ENCODE measurements at regions of chr17 and their contacts with region 1.

Region 1: DNA sequence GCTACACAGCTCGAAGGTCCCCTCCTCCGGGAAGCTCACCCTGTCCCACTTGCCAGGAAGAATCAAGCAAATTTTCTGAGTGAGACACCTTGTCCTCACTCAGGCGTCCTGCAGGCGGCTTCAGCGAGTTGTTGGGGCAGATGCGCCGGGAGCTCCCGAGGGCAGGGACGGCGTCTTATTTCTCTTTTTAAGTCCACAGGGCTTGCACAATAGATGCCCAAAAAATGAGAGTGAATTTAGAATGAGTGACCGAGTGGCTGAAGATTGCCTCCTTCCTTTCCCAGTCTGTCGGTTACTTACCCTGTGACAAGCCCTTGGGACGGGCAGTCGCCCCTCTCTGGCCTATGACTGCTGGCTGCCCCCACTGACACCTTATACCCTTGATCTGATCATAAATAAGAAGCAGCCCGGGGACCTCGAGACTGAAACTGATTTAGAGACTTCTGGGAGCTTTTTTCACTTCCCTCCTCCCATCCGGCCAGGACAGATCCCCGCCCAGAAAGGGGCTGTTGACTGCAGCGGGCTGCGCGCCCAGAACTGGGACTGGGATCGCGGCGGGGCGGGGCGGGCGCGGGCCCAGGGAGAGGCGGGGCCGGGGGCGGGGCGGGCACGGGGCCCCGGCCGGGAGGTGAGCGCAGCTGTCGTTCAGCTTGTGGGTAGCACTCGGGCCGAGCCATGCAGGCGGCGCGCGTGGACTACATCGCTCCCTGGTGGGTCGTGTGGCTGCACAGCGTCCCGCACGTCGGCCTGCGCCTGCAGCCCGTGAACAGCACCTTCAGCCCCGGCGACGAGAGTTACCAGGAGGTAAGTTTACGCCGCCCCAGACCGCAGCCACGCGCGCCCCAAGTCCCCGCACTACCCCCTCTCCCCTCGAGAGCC is at the start of gene TTYH2:
- DNase-seq: peak; percentile 90
- H3K4me3 ChIP-seq: peak within 1 kb of the TSS; percentile 36 to 59 (median 46)
- H3K27ac ChIP-seq: peak within 1 kb of the TSS; percentile 75 to 87 (median 78)
- H3K4me1 ChIP-seq: peaks cover 21 to 45% (median 35%) of the 10 kb centered on the region in 4 donors
- H3K27me3 ChIP-seq: peaks cover 10% of the 10 kb centered on the region
- CTCF ChIP-seq: peak in 4 of 5 experiments; percentile 17 to 55 (median 34)
- EP300 ChIP-seq: no peak
- POLR2A ChIP-seq: peak; percentile 47
- total RNA-seq, gene TTYH2: 0.37 to 5.2 (median 2.3) TPM

Region 2: DNA sequence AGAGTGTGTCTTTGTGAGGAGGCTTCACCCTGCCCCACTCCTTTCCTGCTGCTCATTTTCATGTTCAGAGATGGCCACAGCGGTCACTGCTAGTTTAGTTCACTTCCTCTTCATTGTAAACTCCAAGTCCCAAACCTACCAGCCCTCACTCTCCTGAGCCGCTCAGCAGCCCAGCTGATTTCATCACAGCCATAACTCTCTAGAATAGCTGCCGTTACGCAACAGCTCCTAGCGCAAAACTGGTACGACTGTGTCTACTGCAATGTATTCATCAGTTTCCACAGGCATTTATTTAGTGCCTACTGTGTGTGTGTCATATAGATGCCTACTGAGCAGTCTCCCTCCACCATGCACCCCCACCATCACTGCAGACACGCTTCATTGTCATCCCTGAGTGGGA is 243.2 kb before region 1 on chr17:
- in situ Hi-C with region 1: no loop called
- intact Hi-C with region 1: no loop called
- DNase-seq: peak; percentile 22
- H3K4me3 ChIP-seq: no peak overlapping the region
- H3K27ac ChIP-seq: no peak overlapping the region
- H3K4me1 ChIP-seq: no peaks in the 10 kb centered on the region
- H3K27me3 ChIP-seq: peaks cover 41% of the 10 kb centered on the region
- CTCF ChIP-seq: no peak
- EP300 ChIP-seq: no peak
- POLR2A ChIP-seq: no peak

Region 3: DNA sequence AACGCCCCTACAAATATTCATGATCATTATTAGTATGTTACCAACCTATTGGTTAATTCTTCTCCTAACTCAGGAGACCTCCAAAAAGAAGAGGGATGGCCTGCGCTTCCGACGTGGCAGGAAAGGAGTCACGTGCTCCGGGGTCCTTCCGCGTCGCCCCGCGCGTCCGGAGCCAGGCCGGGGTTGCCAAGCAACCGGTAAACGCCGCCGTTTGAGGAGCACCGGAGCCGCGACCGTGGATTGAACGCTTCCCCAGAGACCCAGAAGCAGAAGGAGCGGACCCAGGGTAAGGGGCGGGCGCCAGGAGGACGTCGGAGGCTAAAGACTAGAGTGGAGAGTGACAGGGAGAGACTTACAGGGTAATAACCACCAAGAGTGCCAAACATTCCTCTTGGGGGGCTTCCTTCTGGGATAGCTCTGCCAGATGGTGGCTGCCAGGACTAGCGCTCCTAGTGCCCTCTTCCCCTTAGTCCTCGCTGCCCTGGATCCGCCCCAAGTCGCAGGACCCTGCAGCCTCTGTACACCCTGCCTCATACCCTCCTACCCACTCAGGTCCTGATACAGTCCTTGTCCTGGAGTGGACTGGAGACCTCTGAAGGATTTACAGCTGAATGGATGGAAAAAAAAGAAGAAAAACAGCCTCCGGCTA is 61.0 kb after region 1 on chr17 and contains the start of gene DNAI2:
- in situ Hi-C with region 1: no loop called
- intact Hi-C with region 1: no loop called
- DNase-seq: peak; percentile 35
- H3K4me3 ChIP-seq: no peak within 1 kb of the TSS
- H3K27ac ChIP-seq: no peak within 1 kb of the TSS
- H3K4me1 ChIP-seq: peaks cover 0 to 15% (median 10%) of the 10 kb centered on the region in 4 donors
- H3K27me3 ChIP-seq: peaks cover 17% of the 10 kb centered on the region
- CTCF ChIP-seq: no peak
- EP300 ChIP-seq: no peak
- POLR2A ChIP-seq: no peak
- total RNA-seq, gene DNAI2: not detected

Region 4: GRCh38 chr17:74442670-74443515 is 229.7 kb after region 1 on chr17:
- in situ Hi-C with region 1: no loop called
- intact Hi-C with region 1: loop called (anchors 10 kb)
- DNase-seq: peak; percentile 91
- H3K4me3 ChIP-seq: peak overlapping the region in 2 of 4 donors; percentile 8 to 31
- H3K27ac ChIP-seq: peak overlapping the region; percentile 87 to 91 (median 90)
- H3K4me1 ChIP-seq: peaks cover 28 to 36% (median 32%) of the 10 kb centered on the region in 4 donors
- H3K27me3 ChIP-seq: no peaks in the 10 kb centered on the region
- CTCF ChIP-seq: peak in 1 of 5 experiments; percentile 14
- EP300 ChIP-seq: no peak
- POLR2A ChIP-seq: peak; percentile 89